ENCODE measurements at regions of chr6 and their contacts with region 1.

Region 1: DNA sequence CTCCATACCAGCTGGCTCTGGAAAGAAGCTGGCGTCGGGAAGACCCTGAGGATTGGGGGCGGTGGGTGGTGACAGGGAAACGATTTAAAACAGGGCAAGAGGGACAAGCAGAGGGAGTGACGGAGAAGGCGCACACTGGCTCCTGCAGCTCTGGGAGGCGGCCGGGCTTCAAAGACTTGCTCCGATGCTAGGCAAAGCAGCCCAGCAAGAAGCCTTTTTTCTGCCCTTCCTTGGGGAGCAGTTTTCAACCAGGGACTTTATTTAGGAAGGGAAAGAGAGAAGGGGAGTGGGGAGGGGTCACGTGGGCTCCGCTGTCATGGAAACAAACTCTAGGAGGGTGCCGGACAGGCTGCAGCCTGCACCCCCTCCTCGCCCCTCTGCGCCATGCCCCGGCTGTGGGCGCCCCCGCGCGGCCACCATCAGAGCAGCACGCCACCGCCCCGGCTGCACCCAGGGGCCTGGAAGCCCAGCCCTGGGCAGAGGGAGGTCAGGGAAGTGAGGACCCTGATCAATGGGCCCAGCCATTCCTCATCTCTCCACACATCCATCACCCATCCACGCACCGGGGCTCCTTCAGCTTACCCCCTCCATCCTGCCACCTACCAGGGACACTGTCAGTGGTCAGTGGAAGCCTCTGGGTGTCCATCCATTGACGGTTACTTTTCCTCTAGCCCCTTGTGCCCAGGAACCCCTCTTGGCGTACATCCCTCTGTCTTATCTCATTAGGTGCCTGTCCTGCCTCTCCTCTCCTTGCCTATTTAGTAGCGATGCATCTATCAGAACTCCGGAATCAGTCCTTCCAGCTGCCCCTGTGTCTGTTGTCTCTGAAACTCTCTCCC is 66.6 kb upstream of the CCDC167 start:
- DNase-seq: peak; percentile 37 to 66
- ATAC-seq: peak; percentile 82 to 91 (median 86)
- H3K4me3 ChIP-seq: peak overlapping the region in 9 of 10 donors; percentile 21 to 54 (median 44)
- H3K27ac ChIP-seq: no peak overlapping the region
- H3K4me1 ChIP-seq: peaks cover 3 to 33% (median 13%) of the 10 kb centered on the region in 9 donors
- H3K27me3 ChIP-seq: peaks cover 0 to 35% (median 21%) of the 10 kb centered on the region in 7 donors
- CTCF ChIP-seq: peak; percentile 64 to 97 (median 83)

Region 2: DNA sequence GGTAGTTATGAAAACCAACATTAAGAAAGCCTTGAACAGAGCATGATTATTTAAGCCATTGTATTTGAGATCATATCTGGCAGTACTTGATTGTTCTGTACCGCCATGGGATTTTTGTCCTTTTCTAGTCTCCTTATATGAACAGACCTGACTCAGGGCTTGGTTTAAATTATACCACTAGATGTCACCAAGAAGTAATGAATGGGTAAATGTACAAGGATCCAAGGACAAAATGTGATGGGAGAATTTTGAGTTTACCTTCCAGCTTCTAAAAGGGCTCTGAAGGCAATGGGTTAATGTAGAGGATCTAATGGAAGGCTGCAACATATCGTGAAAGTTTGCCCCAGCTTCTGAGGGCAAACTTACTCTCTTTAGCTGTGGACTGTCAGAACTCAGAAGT is 200.6 kb before region 1 on chr6:
- intact Hi-C with region 1: loop called in 4 of 10 experiments (anchors 5 to 10 kb)
- DNase-seq: no peak
- ATAC-seq: peak in 6 of 8 donors; percentile 53 to 71 (median 68)
- H3K4me3 ChIP-seq: no peak overlapping the region
- H3K27ac ChIP-seq: peak overlapping the region in 1 of 10 donors; percentile 7
- H3K4me1 ChIP-seq: peaks cover 6 to 53% (median 31%) of the 10 kb centered on the region in 9 donors
- H3K27me3 ChIP-seq: no peaks in the 10 kb centered on the region
- CTCF ChIP-seq: peak in 8 of 9 donors; percentile 11 to 60 (median 40)

Region 3: GRCh38 chr6:37483917-37484785 is 82.2 kb before region 1 on chr6:
- intact Hi-C with region 1: loop called in 9 of 10 experiments (anchors 1 to 5 kb)
- DNase-seq: peak; percentile 48 to 70
- ATAC-seq: peak in 7 of 8 donors; percentile 59 to 75 (median 68)
- H3K4me3 ChIP-seq: no peak overlapping the region
- H3K27ac ChIP-seq: no peak overlapping the region
- H3K4me1 ChIP-seq: peaks cover 0 to 43% (median 27%) of the 10 kb centered on the region in 9 donors
- H3K27me3 ChIP-seq: no peaks in the 10 kb centered on the region
- CTCF ChIP-seq: peak; percentile 57 to 85 (median 79)

Region 4: DNA sequence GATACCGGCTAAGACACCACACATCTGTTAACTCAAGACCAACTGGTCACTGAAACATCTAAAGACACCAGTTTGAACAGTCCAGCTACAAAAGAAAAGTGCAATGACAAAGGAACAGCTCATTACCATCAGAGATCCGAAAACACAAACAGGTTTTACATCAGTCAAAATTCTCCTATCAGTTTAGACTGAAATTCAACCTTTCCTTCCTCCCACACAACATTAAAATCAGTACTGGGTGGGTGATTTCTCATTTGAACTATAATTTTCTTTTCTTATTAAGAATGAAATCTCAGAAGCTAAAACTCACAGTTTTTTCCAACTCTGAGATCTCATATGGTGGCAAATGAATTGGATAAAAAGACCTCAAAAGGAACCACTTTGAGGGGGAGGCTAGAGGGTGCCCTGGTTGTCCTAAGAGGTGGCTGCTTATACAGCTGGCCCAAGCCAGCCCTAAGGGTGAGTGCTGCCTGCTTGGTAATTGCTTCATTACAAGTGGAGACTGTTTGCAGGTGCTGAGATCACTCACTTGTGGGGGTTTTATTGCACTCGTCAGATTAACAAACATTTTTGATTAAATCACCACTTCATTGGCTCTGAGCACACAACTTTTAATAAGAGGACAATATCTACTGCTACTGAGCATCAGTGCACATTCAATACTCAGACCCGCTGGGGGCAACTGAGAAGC is 70.9 kb before region 1 on chr6:
- intact Hi-C with region 1: loop called in 1 of 10 experiments (anchors 2 kb)
- DNase-seq: no peak
- ATAC-seq: no peak
- H3K4me3 ChIP-seq: no peak overlapping the region
- H3K27ac ChIP-seq: no peak overlapping the region
- H3K4me1 ChIP-seq: peaks cover 3 to 34% (median 24%) of the 10 kb centered on the region in 9 donors
- H3K27me3 ChIP-seq: no peaks in the 10 kb centered on the region
- CTCF ChIP-seq: no peak

Region 5: GRCh38 chr6:37648465-37649330 is 82.4 kb after region 1 on chr6:
- intact Hi-C with region 1: no loop called
- DNase-seq: peak in 1 of 2 donors; percentile 39
- ATAC-seq: peak in 6 of 8 donors; percentile 31 to 66 (median 52)
- H3K4me3 ChIP-seq: peak overlapping the region in 8 of 10 donors; percentile 7 to 34 (median 22)
- H3K27ac ChIP-seq: no peak overlapping the region
- H3K4me1 ChIP-seq: peaks cover 0 to 32% (median 22%) of the 10 kb centered on the region in 9 donors
- H3K27me3 ChIP-seq: peaks cover 0 to 31% (median 19%) of the 10 kb centered on the region in 7 donors
- CTCF ChIP-seq: no peak

Region 6: DNA sequence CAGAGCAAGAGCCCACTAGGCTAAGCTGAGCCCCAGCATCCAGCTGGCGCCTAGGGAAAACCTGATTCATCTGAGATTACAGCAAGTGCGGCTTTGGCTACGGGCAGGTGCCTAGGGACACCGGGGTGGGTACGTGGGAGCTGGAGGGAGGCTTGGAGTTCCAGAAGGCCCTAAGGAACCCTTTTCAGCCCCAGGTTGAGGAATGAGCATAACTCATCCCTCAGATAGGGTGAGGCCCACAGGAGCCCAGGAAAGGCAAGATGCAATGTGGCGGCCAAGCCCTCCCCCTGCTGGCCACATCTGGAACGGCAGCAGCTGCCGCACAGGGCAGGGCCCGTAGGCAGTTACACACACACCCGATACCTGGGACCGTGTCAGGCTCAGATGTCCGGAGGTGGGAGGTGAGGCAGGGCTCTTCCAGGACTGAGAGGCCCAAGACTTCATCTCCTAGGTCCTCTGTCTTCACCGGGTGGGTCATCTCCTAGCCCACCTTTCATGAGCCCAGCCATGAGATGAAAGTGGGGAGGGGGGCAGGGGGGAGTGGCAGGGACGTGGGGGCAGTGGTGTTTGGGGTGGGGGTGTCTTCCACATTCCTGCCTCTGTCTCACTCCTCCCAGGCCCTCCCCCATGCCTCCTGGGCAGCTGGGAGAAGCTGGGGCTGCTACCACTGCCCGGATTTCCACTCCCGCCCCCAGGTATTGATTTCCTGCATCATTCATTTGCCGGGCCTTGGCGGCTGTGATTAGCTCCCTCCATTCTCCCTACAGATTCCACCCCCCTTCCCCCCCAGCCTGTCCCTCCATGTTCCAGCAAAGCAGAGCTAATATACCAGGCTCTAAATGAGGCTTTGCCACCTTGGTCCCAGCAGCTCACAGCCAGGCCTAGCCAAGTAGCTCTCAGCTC is 125.8 kb after region 1 on chr6:
- intact Hi-C with region 1: loop called in 6 of 10 experiments (anchors 5 to 10 kb)
- DNase-seq: peak; percentile 67 to 74
- ATAC-seq: peak; percentile 61 to 89 (median 82)
- H3K4me3 ChIP-seq: no peak overlapping the region
- H3K27ac ChIP-seq: no peak overlapping the region
- H3K4me1 ChIP-seq: peaks cover 13 to 25% (median 17%) of the 10 kb centered on the region in 9 donors
- H3K27me3 ChIP-seq: peaks cover 0 to 52% (median 39%) of the 10 kb centered on the region in 7 donors
- CTCF ChIP-seq: peak; percentile 95 to 97 (median 96)